HepG2 (cell line): ENCODE measurements at regions of chr6 and their contacts with region 1.

Region 1: DNA sequence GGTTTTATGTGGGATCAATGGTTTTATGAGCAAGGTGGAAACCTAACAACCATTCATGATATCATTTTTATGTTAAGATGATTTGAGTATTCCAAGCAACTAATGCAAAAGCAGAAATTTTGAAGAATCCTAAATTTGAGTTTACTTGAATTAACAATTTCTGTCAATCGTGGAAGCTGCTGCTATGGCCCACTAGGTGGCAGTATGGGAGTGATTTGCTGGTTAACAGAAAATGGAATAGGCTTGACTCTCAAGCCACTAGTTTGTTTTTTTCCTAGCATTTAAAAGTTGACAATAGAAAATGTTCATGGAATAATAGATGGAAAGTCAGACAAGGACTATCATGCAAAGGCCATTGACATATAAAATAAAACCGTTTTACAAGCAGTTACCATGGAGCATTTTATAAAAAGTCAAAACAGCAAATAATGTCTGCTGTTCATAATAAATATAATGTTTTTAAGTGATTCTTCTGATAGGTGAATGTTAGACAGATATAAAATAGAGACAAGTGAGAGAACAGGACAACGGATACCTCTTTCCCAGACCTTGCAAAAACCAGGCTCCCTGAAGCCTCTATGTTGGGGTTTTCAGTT is 43.0 kb upstream of the TMEM200A start:
- DNase-seq: peak; percentile 55
- ATAC-seq: peak; percentile 77
- H3K4me3 ChIP-seq: no peak overlapping the region
- H3K27ac ChIP-seq: no peak overlapping the region
- H3K4me1 ChIP-seq: no peaks in the 10 kb centered on the region
- H3K27me3 ChIP-seq: no peaks in the 10 kb centered on the region
- CTCF ChIP-seq: peak; percentile 81
- EP300 ChIP-seq: no peak
- POLR2A ChIP-seq: no peak
- RAD21 ChIP-seq: peak; percentile 71

Region 2: GRCh38 chr6:130752267-130752666 is 429.5 kb after region 1 on chr6:
- CTCF ChIA-PET with region 1: no interaction called
- POLR2A ChIA-PET with region 1: no interaction called
- in situ Hi-C with region 1: loop called (anchors 10 kb)
- intact Hi-C with region 1: no loop called
- DNase-seq: no peak
- ATAC-seq: no peak
- H3K4me3 ChIP-seq: no peak overlapping the region
- H3K27ac ChIP-seq: no peak overlapping the region
- H3K4me1 ChIP-seq: no peaks in the 10 kb centered on the region
- H3K27me3 ChIP-seq: no peaks in the 10 kb centered on the region
- CTCF ChIP-seq: no peak
- EP300 ChIP-seq: no peak
- POLR2A ChIP-seq: no peak
- RAD21 ChIP-seq: no peak

Region 3: DNA sequence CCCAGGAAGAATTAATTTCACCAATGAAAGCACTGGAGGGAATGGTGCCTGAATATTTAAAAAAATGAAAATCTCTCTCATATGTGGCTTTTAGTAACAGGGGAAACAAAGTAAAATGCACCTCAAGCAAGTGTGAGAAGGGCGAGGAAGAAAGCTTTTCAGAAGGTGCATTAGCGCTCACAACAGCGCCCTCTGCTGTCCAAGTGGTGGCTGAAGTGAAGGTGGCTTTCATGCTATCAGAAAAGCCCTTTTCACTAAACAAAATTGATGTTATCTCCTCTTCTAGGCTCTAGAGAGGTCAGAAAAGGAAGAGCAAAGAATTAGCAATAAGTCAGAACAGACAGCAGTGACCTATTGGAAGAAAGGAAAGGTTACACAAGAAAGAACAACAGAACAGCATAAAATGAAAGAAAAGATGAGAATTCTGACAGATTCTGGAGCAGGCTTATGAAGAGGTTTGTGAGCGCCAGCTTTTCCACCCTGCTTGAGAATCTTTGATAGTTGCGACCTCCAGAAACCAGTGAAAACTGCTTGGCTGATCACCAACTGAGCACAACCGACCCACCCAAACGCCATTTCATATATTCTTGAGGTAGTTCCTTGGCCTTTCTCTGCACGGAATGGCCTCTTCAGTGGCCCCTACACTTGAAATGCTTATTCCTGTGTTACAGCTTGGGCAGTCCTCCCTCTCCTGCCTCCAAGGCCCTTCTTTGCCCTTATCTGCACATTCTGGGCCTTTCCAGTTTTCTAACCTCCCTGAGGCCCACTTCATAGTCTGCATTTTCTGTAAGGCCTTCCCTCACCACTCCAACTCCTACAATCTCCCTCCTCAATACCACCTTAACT is 549.7 kb after region 1 on chr6:
- CTCF ChIA-PET with region 1: interaction called, 10 read pairs
- POLR2A ChIA-PET with region 1: no interaction called
- in situ Hi-C with region 1: no loop called
- intact Hi-C with region 1: loop called (anchors 2 kb)
- DNase-seq: peak; percentile 62
- ATAC-seq: peak; percentile 86
- H3K4me3 ChIP-seq: no peak overlapping the region
- H3K27ac ChIP-seq: peak overlapping the region; percentile 0
- H3K4me1 ChIP-seq: peaks cover 10% of the 10 kb centered on the region; the same call in 1 of the 2 replicates
- H3K27me3 ChIP-seq: no peaks in the 10 kb centered on the region
- CTCF ChIP-seq: peak; percentile 94
- EP300 ChIP-seq: no peak
- POLR2A ChIP-seq: no peak
- RAD21 ChIP-seq: peak; percentile 77